A673 (cell line): ENCODE measurements at regions of chr13 and their contacts with region 1.

Region 1: GRCh38 chr13:21476893-21477472 is 17.9 kb upstream of the ZDHHC20 start:
- DNase-seq: peak; percentile 93
- H3K4me3 ChIP-seq: peak overlapping the region; percentile 23
- H3K27ac ChIP-seq: peak overlapping the region; percentile 61
- H3K4me1 ChIP-seq: peaks cover 30% of the 10 kb centered on the region
- H3K27me3 ChIP-seq: no peaks in the 10 kb centered on the region
- CTCF ChIP-seq: peak; percentile 99

Region 2: DNA sequence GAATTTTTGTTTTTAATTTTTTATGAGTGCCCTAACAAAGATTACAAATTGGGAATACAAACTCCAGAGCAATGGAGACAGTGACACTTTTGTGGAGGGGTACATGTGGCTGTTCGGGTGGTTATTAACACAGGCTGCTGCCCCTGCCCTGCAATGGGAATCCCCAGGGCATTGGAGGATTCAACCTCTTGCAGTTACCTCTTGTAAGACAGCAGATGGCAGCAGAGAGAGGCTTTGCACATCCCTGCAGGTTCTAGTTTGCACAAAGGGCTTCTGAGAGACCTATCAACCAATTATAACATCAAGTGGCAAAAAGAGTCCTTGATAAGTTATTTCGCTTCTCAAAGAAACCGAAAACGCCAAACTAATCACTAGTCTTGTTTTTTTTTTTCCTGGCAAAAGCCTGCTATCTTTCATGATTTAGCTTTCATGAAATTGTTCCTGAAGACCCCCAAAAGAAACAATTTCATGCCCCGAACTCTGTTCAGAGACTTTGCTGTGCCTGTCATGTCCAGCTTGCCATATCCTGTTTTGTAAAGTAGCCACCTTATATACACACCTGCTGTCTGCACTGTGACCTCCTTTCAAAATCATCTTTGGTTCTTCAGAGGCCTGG is 1294.6 kb before region 1 on chr13:
- CTCF ChIA-PET with region 1: no interaction called
- POLR2A ChIA-PET with region 1: no interaction called
- intact Hi-C with region 1: loop called (anchors 10 kb)
- DNase-seq: peak; percentile 85
- H3K4me3 ChIP-seq: no peak overlapping the region
- H3K27ac ChIP-seq: no peak overlapping the region
- H3K4me1 ChIP-seq: peaks cover 10% of the 10 kb centered on the region
- H3K27me3 ChIP-seq: no peaks in the 10 kb centered on the region
- CTCF ChIP-seq: peak; percentile 84

Region 3: GRCh38 chr13:20713751-20714150 is 763.2 kb before region 1 on chr13:
- CTCF ChIA-PET with region 1: no interaction called
- POLR2A ChIA-PET with region 1: no interaction called
- intact Hi-C with region 1: loop called (anchors 5 kb)
- DNase-seq: peak; percentile 44
- H3K4me3 ChIP-seq: no peak overlapping the region
- H3K27ac ChIP-seq: no peak overlapping the region
- H3K4me1 ChIP-seq: peaks cover 15% of the 10 kb centered on the region
- H3K27me3 ChIP-seq: no peaks in the 10 kb centered on the region
- CTCF ChIP-seq: no peak

Region 4: GRCh38 chr13:21106089-21106488 is 370.9 kb before region 1 on chr13:
- CTCF ChIA-PET with region 1: interaction called, 3 read pairs
- POLR2A ChIA-PET with region 1: no interaction called
- intact Hi-C with region 1: loop called (anchors 1 kb)
- DNase-seq: no peak
- H3K4me3 ChIP-seq: no peak overlapping the region
- H3K27ac ChIP-seq: peak overlapping the region; percentile 10
- H3K4me1 ChIP-seq: peaks cover 11% of the 10 kb centered on the region
- H3K27me3 ChIP-seq: no peaks in the 10 kb centered on the region
- CTCF ChIP-seq: no peak

Region 5: GRCh38 chr13:21240586-21240985 is 236.4 kb before region 1 on chr13:
- CTCF ChIA-PET with region 1: no interaction called
- POLR2A ChIA-PET with region 1: no interaction called
- intact Hi-C with region 1: loop called (anchors 2 kb)
- DNase-seq: peak; percentile 96
- H3K4me3 ChIP-seq: no peak overlapping the region
- H3K27ac ChIP-seq: peak overlapping the region; percentile 84
- H3K4me1 ChIP-seq: peaks cover 34% of the 10 kb centered on the region
- H3K27me3 ChIP-seq: no peaks in the 10 kb centered on the region
- CTCF ChIP-seq: no peak

Region 6: GRCh38 chr13:21395953-21396352 is 81.0 kb before region 1 on chr13:
- CTCF ChIA-PET with region 1: no interaction called
- POLR2A ChIA-PET with region 1: interaction called, 10 read pairs
- intact Hi-C with region 1: loop called (anchors 5 kb)
- DNase-seq: no peak
- H3K4me3 ChIP-seq: no peak overlapping the region
- H3K27ac ChIP-seq: no peak overlapping the region
- H3K4me1 ChIP-seq: peaks cover 31% of the 10 kb centered on the region
- H3K27me3 ChIP-seq: no peaks in the 10 kb centered on the region
- CTCF ChIP-seq: no peak

Region 7: DNA sequence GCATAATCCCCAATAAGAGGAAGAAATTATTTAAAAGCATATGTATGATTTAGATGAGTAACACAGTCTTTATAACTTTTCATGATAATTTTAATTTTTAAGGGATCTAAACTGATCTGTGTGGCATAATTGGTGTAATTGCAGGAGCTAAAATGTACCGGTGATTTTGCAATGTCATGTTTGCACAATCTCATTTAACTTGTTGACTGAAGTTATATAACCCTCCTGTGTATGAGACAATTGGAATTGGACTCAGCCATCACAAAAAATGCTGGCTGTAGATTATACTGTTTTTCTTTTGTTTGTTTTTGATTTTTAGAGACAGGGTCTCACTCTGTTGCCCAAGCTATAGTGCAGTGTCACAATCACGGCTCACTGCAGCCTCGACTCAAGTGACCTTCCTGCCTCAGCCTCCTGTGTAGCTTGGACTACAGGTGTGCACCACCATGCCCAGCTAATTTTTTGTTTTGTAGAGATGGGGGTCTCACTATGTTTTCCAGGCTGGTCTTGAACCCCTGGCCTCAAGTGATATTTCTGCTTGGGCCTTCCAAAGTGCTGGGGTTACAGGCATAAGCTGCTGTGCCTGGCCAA is 220.0 kb after region 1 on chr13:
- CTCF ChIA-PET with region 1: no interaction called
- POLR2A ChIA-PET with region 1: no interaction called
- intact Hi-C with region 1: no loop called
- DNase-seq: no peak
- H3K4me3 ChIP-seq: no peak overlapping the region
- H3K27ac ChIP-seq: no peak overlapping the region
- H3K4me1 ChIP-seq: no peaks in the 10 kb centered on the region
- H3K27me3 ChIP-seq: no peaks in the 10 kb centered on the region
- CTCF ChIP-seq: no peak

Region 8: GRCh38 chr13:22793598-22794134 is 1316.7 kb after region 1 on chr13:
- CTCF ChIA-PET with region 1: no interaction called
- POLR2A ChIA-PET with region 1: no interaction called
- intact Hi-C with region 1: loop called (anchors 10 kb)
- DNase-seq: no peak
- H3K4me3 ChIP-seq: no peak overlapping the region
- H3K27ac ChIP-seq: no peak overlapping the region
- H3K4me1 ChIP-seq: no peaks in the 10 kb centered on the region
- H3K27me3 ChIP-seq: no peaks in the 10 kb centered on the region
- CTCF ChIP-seq: no peak